Esophagus muscularis mucosa (tissue), 4 donors: ENCODE measurements at regions of chr3 and their contacts with region 1.

Region 1: GRCh38 chr3:59049671-59050331 is at the start of gene CFAP20DC:
- DNase-seq: peak; percentile 95
- H3K4me3 ChIP-seq: peak within 1 kb of the TSS; percentile 62 to 80 (median 65)
- H3K27ac ChIP-seq: peak within 1 kb of the TSS; percentile 28 to 63 (median 60)
- H3K4me1 ChIP-seq: peaks cover 0 to 11% (median 7%) of the 10 kb centered on the region in 4 donors
- H3K27me3 ChIP-seq: no peaks in the 10 kb centered on the region
- CTCF ChIP-seq: no peak
- EP300 ChIP-seq: no peak
- POLR2A ChIP-seq: no peak
- total RNA-seq, gene CFAP20DC: 0.17 to 0.32 (median 0.23) TPM in 3 of 4 donors, not detected in the other

Region 2: DNA sequence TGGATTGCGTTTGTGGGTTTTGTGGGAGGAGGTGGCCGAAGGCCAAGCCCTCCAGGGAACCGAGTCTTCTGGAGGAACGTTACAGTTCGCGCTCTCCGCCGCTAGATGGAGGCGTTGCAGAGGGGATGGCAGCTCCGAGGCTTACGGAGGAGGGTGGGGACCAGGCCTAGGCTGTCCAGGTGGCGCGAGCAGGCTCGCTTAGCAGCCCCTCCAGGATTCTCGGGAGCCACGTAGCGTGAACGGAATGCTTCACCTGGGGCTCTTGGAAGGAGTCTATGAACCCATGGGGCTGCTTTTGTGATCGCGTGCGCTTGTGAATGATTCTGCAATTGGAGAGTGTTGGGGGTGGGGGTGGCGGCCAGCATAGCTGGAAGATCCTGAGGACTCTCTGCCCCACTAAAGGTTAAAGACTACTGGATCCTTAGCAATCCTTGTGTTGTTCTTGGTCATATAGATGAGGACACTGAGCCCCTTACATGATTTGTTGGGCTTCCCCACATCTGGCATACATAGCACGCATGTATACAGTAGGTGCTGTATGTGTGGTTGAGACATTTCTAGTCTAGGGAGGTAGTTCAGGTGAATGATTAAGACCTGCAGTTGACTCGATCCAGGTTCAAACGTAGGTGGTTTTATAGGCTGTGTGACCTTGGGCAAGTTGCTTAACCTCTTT is 409.0 kb before region 1 on chr3:
- intact Hi-C with region 1: loop called (anchors 10 kb)
- DNase-seq: no peak
- H3K4me3 ChIP-seq: no peak overlapping the region
- H3K27ac ChIP-seq: no peak overlapping the region
- H3K4me1 ChIP-seq: peaks cover 0 to 6% (median 6%) of the 10 kb centered on the region in 4 donors
- H3K27me3 ChIP-seq: peaks cover 0 to 12% (median 0%) of the 10 kb centered on the region in 4 donors
- CTCF ChIP-seq: peak; percentile 68 to 90 (median 75)
- EP300 ChIP-seq: no peak
- POLR2A ChIP-seq: no peak

Region 3: DNA sequence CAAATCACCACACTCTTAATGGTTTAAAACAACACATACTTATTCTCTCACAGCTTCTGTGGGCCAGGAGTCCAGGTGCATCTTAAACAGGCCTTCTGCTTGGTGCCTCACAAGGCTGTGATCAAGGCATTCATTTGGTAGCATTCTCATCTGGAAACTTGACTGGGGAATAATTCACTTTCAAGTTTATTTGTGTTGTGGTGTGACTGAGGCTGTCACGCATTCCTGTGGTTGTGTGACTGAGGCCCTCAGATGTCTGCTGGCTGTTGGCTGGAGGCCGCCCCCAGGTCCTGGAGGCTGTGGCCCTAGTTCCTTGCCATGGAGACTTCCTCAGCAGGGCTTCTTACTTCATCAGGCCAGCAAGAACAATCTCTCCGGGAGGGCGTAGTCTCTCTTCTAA is 366.3 kb before region 1 on chr3:
- intact Hi-C with region 1: no loop called
- DNase-seq: no peak
- H3K4me3 ChIP-seq: no peak overlapping the region
- H3K27ac ChIP-seq: no peak overlapping the region
- H3K4me1 ChIP-seq: no peaks in the 10 kb centered on the region
- H3K27me3 ChIP-seq: peaks cover 0 to 17% (median 0%) of the 10 kb centered on the region in 4 donors
- CTCF ChIP-seq: no peak
- EP300 ChIP-seq: no peak
- POLR2A ChIP-seq: no peak

Region 4: GRCh38 chr3:59866076-59866475 is 816.3 kb after region 1 on chr3:
- intact Hi-C with region 1: no loop called
- DNase-seq: no peak
- H3K4me3 ChIP-seq: no peak overlapping the region
- H3K27ac ChIP-seq: no peak overlapping the region
- H3K4me1 ChIP-seq: no peaks in the 10 kb centered on the region
- H3K27me3 ChIP-seq: no peaks in the 10 kb centered on the region
- CTCF ChIP-seq: no peak
- EP300 ChIP-seq: no peak
- POLR2A ChIP-seq: no peak